ENCODE measurements at regions of chr22 and their contacts with region 1.

Region 1: GRCh38 chr22:22928666-22929380 is 41.2 kb downstream of the IGLL5 start:
- DNase-seq: peak; percentile 97
- ATAC-seq: peak; percentile 90
- H3K4me3 ChIP-seq: peak overlapping the region in 2 of 5 experiments; percentile 3 to 44
- H3K4me3 Mint-ChIP-seq: peak overlapping the region; percentile 79
- H3K27ac ChIP-seq: peak overlapping the region; percentile 94 to 99
- H3K27ac Mint-ChIP-seq: peak overlapping the region; percentile 95
- H3K4me1 ChIP-seq: peaks cover 98 to 100% of the 10 kb centered on the region in 2 donors
- H3K4me1 Mint-ChIP-seq: peaks cover 98% of the 10 kb centered on the region
- H3K27me3 ChIP-seq: no peaks in the 10 kb centered on the region
- H3K27me3 Mint-ChIP-seq: no peaks in the 10 kb centered on the region
- CTCF ChIP-seq: no peak

Region 2: DNA sequence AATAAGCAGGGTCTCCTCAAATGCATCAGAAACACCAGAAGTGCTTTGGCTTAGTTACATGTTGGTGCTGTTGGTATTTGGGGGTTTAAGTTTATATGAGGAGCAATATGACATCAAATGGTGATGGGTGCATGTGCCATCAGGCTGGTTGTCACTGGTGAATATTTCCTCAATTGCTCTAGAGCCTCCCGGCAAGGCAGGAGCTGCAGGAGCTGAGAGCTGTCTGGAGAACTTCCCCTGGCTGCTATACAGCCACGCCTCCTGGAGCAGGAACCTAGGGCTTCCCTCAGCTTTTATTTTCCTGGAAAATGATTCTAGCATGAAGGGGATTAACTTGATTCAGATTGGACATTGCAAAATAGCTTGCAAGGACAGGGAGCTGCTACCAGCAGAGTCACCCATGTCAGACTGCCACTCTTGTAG is 25.5 kb before region 1 on chr22:
- CTCF ChIA-PET with region 1: interaction called, 6 read pairs
- POLR2A ChIA-PET with region 1: interaction called, 40 read pairs
- intact Hi-C with region 1: loop called (anchors 2 kb)
- DNase-seq: no peak
- ATAC-seq: no peak
- H3K4me3 ChIP-seq: peak overlapping the region in 1 of 5 experiments; percentile 18
- H3K4me3 Mint-ChIP-seq: peak overlapping the region; percentile 69
- H3K27ac ChIP-seq: peak overlapping the region; percentile 52 to 53
- H3K27ac Mint-ChIP-seq: peak overlapping the region; percentile 61
- H3K4me1 ChIP-seq: peaks cover 43 to 77% of the 10 kb centered on the region in 2 donors
- H3K4me1 Mint-ChIP-seq: peaks cover 69% of the 10 kb centered on the region
- H3K27me3 ChIP-seq: no peaks in the 10 kb centered on the region
- H3K27me3 Mint-ChIP-seq: no peaks in the 10 kb centered on the region
- CTCF ChIP-seq: no peak

Region 3: GRCh38 chr22:22913989-22914388 is 14.8 kb before region 1 on chr22:
- CTCF ChIA-PET with region 1: interaction called, 7 read pairs
- POLR2A ChIA-PET with region 1: interaction called, 11 read pairs
- intact Hi-C with region 1: loop called (anchors 2 kb)
- DNase-seq: peak; percentile 60
- ATAC-seq: peak; percentile 73
- H3K4me3 ChIP-seq: no peak overlapping the region
- H3K4me3 Mint-ChIP-seq: peak overlapping the region; percentile 55
- H3K27ac ChIP-seq: peak overlapping the region; percentile 65 to 77
- H3K27ac Mint-ChIP-seq: peak overlapping the region; percentile 76
- H3K4me1 ChIP-seq: peaks cover 57 to 83% of the 10 kb centered on the region in 2 donors
- H3K4me1 Mint-ChIP-seq: peaks cover 81% of the 10 kb centered on the region
- H3K27me3 ChIP-seq: no peaks in the 10 kb centered on the region
- H3K27me3 Mint-ChIP-seq: no peaks in the 10 kb centered on the region
- CTCF ChIP-seq: no peak

Measured in B cell (primary cell).